Activated CD8-positive, alpha-beta T cell treated with anti-CD3 and anti-CD28 coated beads, Interleukin-2, amount 10 ng/mL, durations not matched to agents 7 days and 5 days (primary cell): ENCODE measurements at regions of chr15 and their contacts with region 1.

Region 1: GRCh38 chr15:57861036-57861638 is 154.6 kb downstream of the POLR2M start:
- DNase-seq: peak; percentile 61
- ATAC-seq: no peak
- H3K4me3 Mint-ChIP-seq: no peak overlapping the region
- H3K27ac Mint-ChIP-seq: no peak overlapping the region
- H3K4me1 Mint-ChIP-seq: no peaks in the 10 kb centered on the region
- H3K27me3 Mint-ChIP-seq: peaks cover 33% of the 10 kb centered on the region

Region 2: GRCh38 chr15:57561041-57561711 is 300.0 kb before region 1 on chr15:
- CTCF ChIA-PET with region 1: interaction called, 33 read pairs
- POLR2A ChIA-PET with region 1: no interaction called
- DNase-seq: peak; percentile 74
- ATAC-seq: peak; percentile 84
- H3K4me3 Mint-ChIP-seq: no peak overlapping the region
- H3K27ac Mint-ChIP-seq: no peak overlapping the region
- H3K4me1 Mint-ChIP-seq: peaks cover 34% of the 10 kb centered on the region
- H3K27me3 Mint-ChIP-seq: peaks cover 13% of the 10 kb centered on the region

Region 3: DNA sequence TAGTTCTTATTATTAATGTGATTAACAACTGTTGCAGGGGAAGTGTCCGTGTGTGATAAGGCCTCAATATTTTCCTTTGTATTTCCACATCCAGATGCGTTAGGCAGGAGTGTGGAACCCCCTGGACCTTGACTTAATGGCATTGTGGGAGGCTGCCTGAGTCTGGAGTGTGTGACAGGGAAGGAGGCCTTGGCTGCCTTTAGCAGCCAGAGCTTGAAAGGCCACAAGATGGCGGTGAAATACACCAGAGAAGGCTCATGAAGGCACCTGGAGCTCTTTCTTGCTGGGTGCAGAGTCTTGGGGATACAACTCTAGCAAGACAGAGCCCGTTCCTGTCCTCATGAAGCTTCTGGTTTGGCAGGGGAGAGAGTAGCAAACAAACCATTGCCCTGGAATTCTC is 117.7 kb before region 1 on chr15:
- CTCF ChIA-PET with region 1: interaction called, 210 read pairs
- POLR2A ChIA-PET with region 1: no interaction called
- DNase-seq: no peak
- ATAC-seq: no peak
- H3K4me3 Mint-ChIP-seq: no peak overlapping the region
- H3K27ac Mint-ChIP-seq: no peak overlapping the region
- H3K4me1 Mint-ChIP-seq: peaks cover 8% of the 10 kb centered on the region
- H3K27me3 Mint-ChIP-seq: no peaks in the 10 kb centered on the region

Region 4: DNA sequence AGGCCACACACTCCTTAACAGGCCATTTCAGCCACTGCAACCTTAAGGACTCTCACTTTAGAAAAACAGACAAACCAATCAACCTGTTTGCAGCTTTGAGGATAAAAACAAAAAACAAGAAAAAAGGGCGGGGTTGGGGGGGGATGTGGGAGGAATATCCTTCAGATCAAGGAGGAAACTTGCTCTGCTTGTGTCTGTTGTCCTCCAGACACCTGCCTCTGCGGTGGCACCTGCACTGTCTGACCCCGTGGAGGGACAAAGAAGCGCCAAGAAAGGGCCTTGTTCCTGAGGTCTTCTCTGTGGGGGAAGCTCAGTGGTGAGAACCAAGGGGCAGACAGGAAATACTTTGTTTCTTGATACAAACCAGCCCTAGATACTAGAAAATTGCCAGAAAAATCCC is 84.1 kb before region 1 on chr15:
- CTCF ChIA-PET with region 1: interaction called, 18 read pairs
- POLR2A ChIA-PET with region 1: no interaction called
- DNase-seq: no peak
- ATAC-seq: no peak
- H3K4me3 Mint-ChIP-seq: no peak overlapping the region
- H3K27ac Mint-ChIP-seq: peak overlapping the region; percentile 35
- H3K4me1 Mint-ChIP-seq: peaks cover 23% of the 10 kb centered on the region
- H3K27me3 Mint-ChIP-seq: peaks cover 2% of the 10 kb centered on the region

Region 5: GRCh38 chr15:57849317-57849716 is 11.8 kb before region 1 on chr15:
- CTCF ChIA-PET with region 1: interaction called, 16 read pairs
- POLR2A ChIA-PET with region 1: no interaction called
- DNase-seq: no peak
- ATAC-seq: no peak
- H3K4me3 Mint-ChIP-seq: no peak overlapping the region
- H3K27ac Mint-ChIP-seq: no peak overlapping the region
- H3K4me1 Mint-ChIP-seq: no peaks in the 10 kb centered on the region
- H3K27me3 Mint-ChIP-seq: peaks cover 11% of the 10 kb centered on the region

Region 6: GRCh38 chr15:57943766-57944420 is 82.8 kb after region 1 on chr15:
- CTCF ChIA-PET with region 1: no interaction called
- POLR2A ChIA-PET with region 1: no interaction called
- DNase-seq: no peak
- ATAC-seq: no peak
- H3K4me3 Mint-ChIP-seq: no peak overlapping the region
- H3K27ac Mint-ChIP-seq: no peak overlapping the region
- H3K4me1 Mint-ChIP-seq: no peaks in the 10 kb centered on the region
- H3K27me3 Mint-ChIP-seq: peaks cover 20% of the 10 kb centered on the region

Region 7: GRCh38 chr15:58056015-58056414 is 194.9 kb after region 1 on chr15:
- CTCF ChIA-PET with region 1: no interaction called
- POLR2A ChIA-PET with region 1: no interaction called
- DNase-seq: no peak
- ATAC-seq: no peak
- H3K4me3 Mint-ChIP-seq: no peak overlapping the region
- H3K27ac Mint-ChIP-seq: no peak overlapping the region
- H3K4me1 Mint-ChIP-seq: no peaks in the 10 kb centered on the region
- H3K27me3 Mint-ChIP-seq: peaks cover 46% of the 10 kb centered on the region

Region 8: DNA sequence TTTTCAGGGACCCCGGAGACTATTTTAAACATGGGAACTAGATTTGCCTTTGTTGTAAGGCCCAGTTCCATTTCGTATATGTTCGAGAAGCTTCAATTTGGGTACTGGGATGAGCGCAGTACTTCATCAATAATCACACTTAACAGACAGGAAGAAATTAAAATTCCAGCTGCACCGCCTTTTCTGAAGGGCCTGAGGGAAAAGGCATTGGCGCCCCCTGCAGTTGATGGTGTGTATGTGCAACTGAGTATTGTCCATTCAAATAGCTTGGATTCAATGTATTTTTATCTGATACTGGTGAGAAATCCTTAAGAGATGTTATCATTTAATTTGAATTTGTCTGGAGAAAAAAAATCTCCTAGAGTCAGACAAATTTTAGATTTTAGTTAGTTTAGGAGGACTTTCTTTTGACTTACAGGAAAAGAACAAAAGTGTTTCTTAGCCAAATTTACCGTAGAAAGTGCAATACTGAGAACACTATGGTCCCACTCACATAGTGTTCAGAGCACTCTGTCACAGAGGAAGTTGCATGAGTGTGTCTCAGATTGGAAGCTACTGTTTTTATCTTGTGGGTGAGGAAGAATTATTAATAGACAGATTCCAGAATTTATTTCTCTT is 209.8 kb after region 1 on chr15:
- CTCF ChIA-PET with region 1: interaction called, 78 read pairs
- POLR2A ChIA-PET with region 1: no interaction called
- DNase-seq: peak; percentile 63
- ATAC-seq: no peak
- H3K4me3 Mint-ChIP-seq: no peak overlapping the region
- H3K27ac Mint-ChIP-seq: no peak overlapping the region
- H3K4me1 Mint-ChIP-seq: peaks cover 3% of the 10 kb centered on the region
- H3K27me3 Mint-ChIP-seq: peaks cover 33% of the 10 kb centered on the region